PC-3 (cell line): ENCODE measurements at regions of chrX and their contacts with region 1.

Region 1: DNA sequence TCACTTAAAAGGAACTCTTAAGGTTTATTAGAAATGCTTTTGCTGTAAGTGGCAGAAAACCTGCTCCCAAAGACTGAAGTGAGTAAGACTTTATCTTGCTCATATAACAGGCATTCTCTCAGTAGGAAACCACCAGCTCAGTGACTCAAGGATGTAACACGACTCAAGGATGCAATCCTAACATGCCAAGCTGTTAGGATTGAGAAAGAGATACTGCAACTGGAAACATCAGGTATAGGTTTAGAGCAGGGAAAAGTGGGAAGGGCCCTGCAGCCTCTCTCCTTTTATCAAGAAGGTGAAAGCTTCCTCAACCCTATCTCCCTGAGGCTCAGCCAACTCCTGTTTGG is 11.9 kb upstream of the SLC9A7 start:
- DNase-seq: peak; percentile 87
- ATAC-seq: peak; percentile 95
- H3K4me3 ChIP-seq: peak overlapping the region; percentile 42; the same call in 1 of the 2 replicates
- H3K27ac ChIP-seq: peak overlapping the region; percentile 93
- H3K4me1 ChIP-seq: peaks cover 31% of the 10 kb centered on the region
- H3K27me3 ChIP-seq: no peaks in the 10 kb centered on the region
- CTCF ChIP-seq: no peak

Region 2: DNA sequence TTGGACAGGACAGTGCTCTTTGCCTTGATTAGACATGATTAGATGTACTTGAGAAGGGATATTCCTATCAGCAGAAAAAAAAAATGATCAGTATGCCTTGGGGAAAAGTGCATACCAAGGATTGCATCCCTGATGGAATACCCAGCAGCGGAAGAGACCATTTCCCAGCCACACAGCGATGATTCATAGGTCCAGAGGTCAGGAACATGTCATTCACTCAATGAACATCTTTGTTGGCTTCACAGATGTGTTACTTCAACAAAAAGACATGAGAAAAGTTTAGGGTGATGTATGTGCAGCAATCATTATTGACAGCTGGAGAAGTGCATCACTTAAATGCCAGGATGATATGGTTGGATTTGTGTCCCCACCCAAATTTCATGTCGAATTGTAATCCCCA is 519.0 kb before region 1 on chrX:
- CTCF ChIA-PET with region 1: no interaction called
- POLR2A ChIA-PET with region 1: no interaction called
- intact Hi-C with region 1: no loop called
- DNase-seq: peak; percentile 58
- ATAC-seq: no peak
- H3K4me3 ChIP-seq: no peak overlapping the region
- H3K27ac ChIP-seq: no peak overlapping the region
- H3K4me1 ChIP-seq: peaks cover 7% of the 10 kb centered on the region
- H3K27me3 ChIP-seq: no peaks in the 10 kb centered on the region
- CTCF ChIP-seq: no peak

Region 3: DNA sequence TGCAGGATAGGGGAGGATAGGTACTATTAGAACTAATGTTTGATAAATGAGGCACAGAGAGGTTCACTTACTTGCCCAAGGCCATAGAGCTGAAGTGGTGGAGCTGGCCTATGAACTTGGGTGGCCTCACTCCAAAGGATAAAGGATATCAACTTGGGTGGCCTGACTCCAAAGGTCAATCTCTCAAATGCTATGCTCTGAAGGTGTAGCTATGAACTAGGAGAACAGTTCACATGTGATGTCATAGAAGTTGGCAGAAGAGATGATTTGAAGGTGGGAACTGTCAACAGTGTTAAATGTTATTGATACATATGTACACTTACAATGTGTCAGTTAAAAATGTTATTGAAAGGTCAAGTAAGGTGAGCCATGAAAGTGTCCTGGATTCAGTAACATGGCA is 203.4 kb before region 1 on chrX:
- CTCF ChIA-PET with region 1: no interaction called
- POLR2A ChIA-PET with region 1: no interaction called
- intact Hi-C with region 1: loop called (anchors 2 kb)
- DNase-seq: no peak
- ATAC-seq: no peak
- H3K4me3 ChIP-seq: no peak overlapping the region
- H3K27ac ChIP-seq: peak overlapping the region; percentile 75
- H3K4me1 ChIP-seq: peaks cover 19% of the 10 kb centered on the region
- H3K27me3 ChIP-seq: no peaks in the 10 kb centered on the region
- CTCF ChIP-seq: no peak

Region 4: GRCh38 chrX:46601283-46601682 is 169.5 kb before region 1 on chrX:
- CTCF ChIA-PET with region 1: no interaction called
- POLR2A ChIA-PET with region 1: no interaction called
- intact Hi-C with region 1: no loop called
- DNase-seq: no peak
- ATAC-seq: no peak
- H3K4me3 ChIP-seq: no peak overlapping the region
- H3K27ac ChIP-seq: no peak overlapping the region
- H3K4me1 ChIP-seq: no peaks in the 10 kb centered on the region
- H3K27me3 ChIP-seq: no peaks in the 10 kb centered on the region
- CTCF ChIP-seq: no peak

Region 5: GRCh38 chrX:46620505-46620904 is 150.3 kb before region 1 on chrX:
- CTCF ChIA-PET with region 1: no interaction called
- POLR2A ChIA-PET with region 1: no interaction called
- intact Hi-C with region 1: no loop called
- DNase-seq: no peak
- ATAC-seq: no peak
- H3K4me3 ChIP-seq: no peak overlapping the region
- H3K27ac ChIP-seq: no peak overlapping the region
- H3K4me1 ChIP-seq: peaks cover 10% of the 10 kb centered on the region
- H3K27me3 ChIP-seq: no peaks in the 10 kb centered on the region
- CTCF ChIP-seq: no peak

Region 6: GRCh38 chrX:46796574-46797191 is 25.9 kb after region 1 on chrX:
- CTCF ChIA-PET with region 1: interaction called, 3 read pairs
- POLR2A ChIA-PET with region 1: no interaction called
- intact Hi-C with region 1: loop called (anchors 1 kb)
- DNase-seq: peak; percentile 86
- ATAC-seq: peak; percentile 42
- H3K4me3 ChIP-seq: no peak overlapping the region
- H3K27ac ChIP-seq: no peak overlapping the region
- H3K4me1 ChIP-seq: peaks cover 29% of the 10 kb centered on the region
- H3K27me3 ChIP-seq: no peaks in the 10 kb centered on the region
- CTCF ChIP-seq: peak; percentile 88